Right cardiac atrium (tissue), 5 donors: ENCODE measurements at regions of chr5 and their contacts with region 1.

Region 1: GRCh38 chr5:152397581-152397980 is 7.5 kb downstream of the NMUR2 start:
- DNase-seq: no peak
- ATAC-seq: no peak
- H3K4me3 ChIP-seq: no peak overlapping the region
- H3K27ac ChIP-seq: no peak overlapping the region
- H3K4me1 ChIP-seq: no peaks in the 10 kb centered on the region
- H3K27me3 ChIP-seq: no peaks in the 10 kb centered on the region

Region 2: DNA sequence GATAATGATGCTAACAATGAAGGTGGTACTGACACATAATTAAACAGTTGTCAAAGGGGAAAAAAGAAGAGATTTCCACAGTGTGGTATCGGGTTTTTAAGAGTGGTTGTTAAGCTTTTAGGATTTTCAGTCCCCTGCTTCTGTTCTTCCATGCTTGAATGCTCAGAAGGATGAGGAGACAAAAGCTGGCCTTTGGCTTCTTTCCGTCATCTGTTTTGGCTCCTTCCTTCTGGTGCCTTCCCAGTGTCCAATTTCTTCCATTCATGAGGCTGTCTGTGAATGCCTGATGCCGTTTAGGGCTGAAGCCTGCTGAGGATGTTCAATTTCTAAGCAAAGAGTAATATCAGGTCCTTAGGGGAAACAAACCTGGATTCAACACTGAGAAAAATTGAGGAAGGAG is 293.4 kb before region 1 on chr5:
- intact Hi-C with region 1: no loop called
- DNase-seq: no peak
- ATAC-seq: no peak
- H3K4me3 ChIP-seq: no peak overlapping the region
- H3K27ac ChIP-seq: no peak overlapping the region
- H3K4me1 ChIP-seq: no peaks in the 10 kb centered on the region
- H3K27me3 ChIP-seq: no peaks in the 10 kb centered on the region

Region 3: DNA sequence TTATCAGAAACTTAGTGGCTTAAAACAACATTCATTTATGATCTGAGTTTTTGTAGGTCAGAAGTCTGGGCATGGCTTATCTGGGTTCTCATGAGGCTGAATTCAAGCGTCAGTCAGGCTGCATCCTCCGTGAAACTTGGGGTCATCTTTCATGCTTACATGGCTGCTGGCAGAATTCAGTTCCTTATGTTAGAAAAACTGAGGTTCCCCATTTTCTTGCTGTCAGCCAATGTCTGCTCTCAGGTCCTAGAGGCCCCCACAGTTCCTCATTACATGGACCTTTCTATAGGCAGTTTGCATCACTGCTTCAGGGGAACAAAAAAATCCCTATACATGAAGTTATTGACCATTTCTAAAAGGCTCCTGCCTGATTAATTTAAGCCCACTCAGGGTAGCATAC is 91.3 kb after region 1 on chr5:
- intact Hi-C with region 1: loop called in 1 of 4 experiments (anchors 10 kb)
- DNase-seq: no peak
- ATAC-seq: no peak
- H3K4me3 ChIP-seq: no peak overlapping the region
- H3K27ac ChIP-seq: no peak overlapping the region
- H3K4me1 ChIP-seq: no peaks in the 10 kb centered on the region
- H3K27me3 ChIP-seq: no peaks in the 10 kb centered on the region

Region 4: DNA sequence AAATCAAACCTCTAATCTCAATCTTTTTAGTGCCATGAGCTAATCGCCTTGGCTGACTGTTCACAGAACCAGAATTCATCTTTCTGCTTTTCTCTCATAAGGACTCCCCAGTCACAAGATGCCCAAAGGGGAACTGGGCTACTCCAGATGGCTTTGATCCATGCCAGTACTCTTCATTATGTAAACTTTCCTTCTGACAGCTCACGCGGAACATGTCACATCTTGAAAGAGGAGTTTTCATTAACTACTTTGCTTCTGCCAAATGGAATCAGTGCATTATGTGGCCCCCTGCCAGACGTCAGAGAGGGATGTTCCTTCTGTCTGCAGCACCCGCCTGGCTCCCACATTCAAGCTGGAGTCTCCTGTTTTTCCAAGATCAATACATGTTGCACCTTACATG is 149.6 kb after region 1 on chr5:
- intact Hi-C with region 1: loop called in 1 of 4 experiments (anchors 5 kb)
- DNase-seq: no peak
- ATAC-seq: no peak
- H3K4me3 ChIP-seq: no peak overlapping the region
- H3K27ac ChIP-seq: no peak overlapping the region
- H3K4me1 ChIP-seq: no peaks in the 10 kb centered on the region
- H3K27me3 ChIP-seq: no peaks in the 10 kb centered on the region

Region 5: DNA sequence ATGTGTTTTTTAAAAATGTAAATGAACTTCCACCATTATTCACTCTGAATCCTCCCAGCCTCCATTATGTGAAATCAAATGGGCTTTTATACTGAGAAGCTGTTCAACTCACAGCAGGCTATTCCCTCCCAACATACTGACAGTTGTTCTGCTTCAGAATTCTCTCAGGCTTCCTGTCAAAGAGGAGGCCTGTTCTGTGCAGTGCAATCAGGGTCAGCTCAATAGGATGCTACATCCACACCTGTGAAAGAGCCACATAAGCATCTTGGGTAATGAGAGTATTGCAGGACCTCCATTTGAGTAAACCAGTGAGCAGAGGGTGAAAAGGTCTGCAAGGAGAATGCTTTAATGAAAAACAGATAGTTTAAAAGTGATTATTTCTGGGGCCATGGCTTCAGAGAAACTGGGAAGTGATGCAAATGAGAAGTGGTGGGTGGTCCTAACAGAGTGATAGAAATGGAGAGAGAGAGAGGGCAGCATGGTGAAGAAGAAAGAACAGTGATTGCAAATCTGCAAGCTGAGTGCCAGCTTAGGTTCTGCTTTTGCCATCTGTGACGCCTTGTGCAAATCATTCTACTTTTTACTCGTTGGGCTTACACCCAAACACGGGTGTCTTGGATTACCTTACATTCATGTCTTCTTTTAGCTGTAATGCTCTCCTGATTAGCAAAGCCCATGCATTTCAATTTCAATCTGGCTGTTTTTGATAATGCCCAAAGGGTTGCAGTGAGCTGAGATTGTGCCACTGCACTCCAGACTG is 210.0 kb after region 1 on chr5:
- intact Hi-C with region 1: no loop called
- DNase-seq: no peak
- ATAC-seq: no peak
- H3K4me3 ChIP-seq: no peak overlapping the region
- H3K27ac ChIP-seq: no peak overlapping the region
- H3K4me1 ChIP-seq: no peaks in the 10 kb centered on the region
- H3K27me3 ChIP-seq: no peaks in the 10 kb centered on the region